ENCODE measurements at regions of chr7 and their contacts with region 1.

Region 1: GRCh38 chr7:11458736-11459483 is 373.1 kb downstream of the THSD7A start:
- DNase-seq: peak; percentile 96
- H3K4me3 ChIP-seq: peak overlapping the region in 1 of 3 experiments; percentile 10
- H3K27ac ChIP-seq: peak overlapping the region; percentile 93
- H3K4me1 ChIP-seq: peaks cover 23% of the 10 kb centered on the region
- H3K27me3 ChIP-seq: no peaks in the 10 kb centered on the region
- CTCF ChIP-seq: no peak
- POLR2A ChIP-seq: peak; percentile 51

Region 2: GRCh38 chr7:10343108-10343507 is 1115.8 kb before region 1 on chr7:
- CTCF ChIA-PET with region 1: no interaction called
- POLR2A ChIA-PET with region 1: no interaction called
- dilution Hi-C with region 1: no loop called
- intact Hi-C with region 1: no loop called
- DNase-seq: no peak
- H3K4me3 ChIP-seq: no peak overlapping the region
- H3K27ac ChIP-seq: no peak overlapping the region
- H3K4me1 ChIP-seq: no peaks in the 10 kb centered on the region
- H3K27me3 ChIP-seq: no peaks in the 10 kb centered on the region
- CTCF ChIP-seq: no peak
- POLR2A ChIP-seq: no peak

Region 3: GRCh38 chr7:10637991-10638390 is 820.9 kb before region 1 on chr7:
- CTCF ChIA-PET with region 1: no interaction called
- POLR2A ChIA-PET with region 1: no interaction called
- dilution Hi-C with region 1: no loop called
- intact Hi-C with region 1: loop called (anchors 5 kb)
- DNase-seq: no peak
- H3K4me3 ChIP-seq: no peak overlapping the region
- H3K27ac ChIP-seq: no peak overlapping the region
- H3K4me1 ChIP-seq: no peaks in the 10 kb centered on the region
- H3K27me3 ChIP-seq: no peaks in the 10 kb centered on the region
- CTCF ChIP-seq: no peak
- POLR2A ChIP-seq: no peak

Region 4: GRCh38 chr7:11625669-11626068 is 166.8 kb after region 1 on chr7:
- CTCF ChIA-PET with region 1: no interaction called
- POLR2A ChIA-PET with region 1: no interaction called
- dilution Hi-C with region 1: no loop called
- intact Hi-C with region 1: loop called (anchors 10 kb)
- DNase-seq: peak; percentile 96
- H3K4me3 ChIP-seq: no peak overlapping the region
- H3K27ac ChIP-seq: peak overlapping the region; percentile 56
- H3K4me1 ChIP-seq: peaks cover 16% of the 10 kb centered on the region
- H3K27me3 ChIP-seq: no peaks in the 10 kb centered on the region
- CTCF ChIP-seq: no peak
- POLR2A ChIP-seq: no peak